ENCODE measurements at regions of chr12 and their contacts with region 1.

Region 1: DNA sequence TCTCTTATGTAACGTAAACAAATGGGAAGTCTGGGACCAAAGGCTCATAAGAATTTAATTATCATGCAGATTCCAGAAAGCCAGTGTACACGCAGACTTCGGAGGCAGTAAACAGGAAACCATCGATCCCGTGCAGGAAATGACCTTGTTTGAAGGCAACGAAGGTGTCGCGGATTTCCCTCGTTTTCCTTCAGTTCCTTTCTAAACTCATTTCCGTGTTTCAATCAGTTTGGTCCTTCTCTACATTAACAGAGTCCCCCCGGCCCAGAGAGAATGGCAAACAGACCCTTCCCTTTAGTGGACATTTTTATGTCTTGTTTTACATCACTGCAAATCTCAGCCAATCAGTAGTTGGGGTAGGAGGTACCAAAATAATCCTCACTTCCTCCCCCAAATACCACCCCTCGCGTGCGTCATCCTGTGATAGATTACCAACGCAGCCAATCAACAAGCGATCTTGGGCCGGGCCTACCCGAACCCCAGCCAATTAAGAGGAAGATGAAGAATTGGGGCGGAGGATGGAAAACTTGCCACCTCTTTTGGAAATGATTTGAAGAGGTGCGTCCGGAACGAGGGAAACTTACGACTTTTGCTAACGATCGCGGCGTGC is 6.1 kb upstream of the FOXJ2 start:
- DNase-seq: peak; percentile 97
- H3K4me3 ChIP-seq: peak overlapping the region; percentile 73
- H3K27me3 ChIP-seq: no peaks in the 10 kb centered on the region
- CTCF ChIP-seq: no peak

Region 2: GRCh38 chr12:6312529-6313325 is 1713.7 kb before region 1 on chr12:
- CTCF ChIA-PET with region 1: no interaction called
- POLR2A ChIA-PET with region 1: no interaction called
- DNase-seq: no peak
- H3K4me3 ChIP-seq: no peak overlapping the region
- H3K27me3 ChIP-seq: peaks cover 12% of the 10 kb centered on the region
- CTCF ChIP-seq: no peak

Region 3: GRCh38 chr12:7915559-7916403 is 110.6 kb before region 1 on chr12:
- CTCF ChIA-PET with region 1: no interaction called
- POLR2A ChIA-PET with region 1: interaction called, 21 read pairs
- DNase-seq: no peak
- H3K4me3 ChIP-seq: peak overlapping the region; percentile 18
- H3K27me3 ChIP-seq: no peaks in the 10 kb centered on the region
- CTCF ChIP-seq: no peak